AG04449 (cell line): ENCODE measurements at regions of chr11 and their contacts with region 1.

Region 1: GRCh38 chr11:73965076-73965860 is 14.4 kb downstream of the DNAJB13 start:
- DNase-seq: no peak
- H3K4me3 ChIP-seq: peak overlapping the region; percentile 13
- CTCF ChIP-seq: no peak

Region 2: DNA sequence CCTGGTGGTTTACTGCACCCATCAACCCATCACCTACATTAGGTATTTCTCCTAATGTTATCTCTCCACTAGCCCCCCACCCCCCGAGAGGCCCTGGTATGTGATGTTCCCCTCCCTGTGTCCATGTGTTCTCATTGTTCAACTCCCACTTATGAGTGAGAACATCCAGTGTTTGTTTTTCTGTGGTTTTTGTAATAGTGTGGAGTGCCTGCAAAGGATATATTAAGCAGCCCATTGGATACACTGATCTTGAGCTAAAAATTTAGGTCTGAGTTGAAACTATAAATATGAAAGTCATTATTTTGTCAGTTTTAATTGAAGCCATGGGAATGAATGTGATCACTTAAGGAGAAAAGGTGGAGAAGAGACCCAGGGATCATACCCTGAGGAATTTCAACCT is 154.6 kb before region 1 on chr11:
- CTCF ChIA-PET with region 1: no interaction called
- POLR2A ChIA-PET with region 1: no interaction called
- DNase-seq: no peak
- H3K4me3 ChIP-seq: no peak overlapping the region
- CTCF ChIP-seq: no peak

Region 3: GRCh38 chr11:73862971-73863370 is 102.3 kb before region 1 on chr11:
- CTCF ChIA-PET with region 1: no interaction called
- POLR2A ChIA-PET with region 1: no interaction called
- DNase-seq: no peak
- H3K4me3 ChIP-seq: no peak overlapping the region
- CTCF ChIP-seq: no peak

Region 4: DNA sequence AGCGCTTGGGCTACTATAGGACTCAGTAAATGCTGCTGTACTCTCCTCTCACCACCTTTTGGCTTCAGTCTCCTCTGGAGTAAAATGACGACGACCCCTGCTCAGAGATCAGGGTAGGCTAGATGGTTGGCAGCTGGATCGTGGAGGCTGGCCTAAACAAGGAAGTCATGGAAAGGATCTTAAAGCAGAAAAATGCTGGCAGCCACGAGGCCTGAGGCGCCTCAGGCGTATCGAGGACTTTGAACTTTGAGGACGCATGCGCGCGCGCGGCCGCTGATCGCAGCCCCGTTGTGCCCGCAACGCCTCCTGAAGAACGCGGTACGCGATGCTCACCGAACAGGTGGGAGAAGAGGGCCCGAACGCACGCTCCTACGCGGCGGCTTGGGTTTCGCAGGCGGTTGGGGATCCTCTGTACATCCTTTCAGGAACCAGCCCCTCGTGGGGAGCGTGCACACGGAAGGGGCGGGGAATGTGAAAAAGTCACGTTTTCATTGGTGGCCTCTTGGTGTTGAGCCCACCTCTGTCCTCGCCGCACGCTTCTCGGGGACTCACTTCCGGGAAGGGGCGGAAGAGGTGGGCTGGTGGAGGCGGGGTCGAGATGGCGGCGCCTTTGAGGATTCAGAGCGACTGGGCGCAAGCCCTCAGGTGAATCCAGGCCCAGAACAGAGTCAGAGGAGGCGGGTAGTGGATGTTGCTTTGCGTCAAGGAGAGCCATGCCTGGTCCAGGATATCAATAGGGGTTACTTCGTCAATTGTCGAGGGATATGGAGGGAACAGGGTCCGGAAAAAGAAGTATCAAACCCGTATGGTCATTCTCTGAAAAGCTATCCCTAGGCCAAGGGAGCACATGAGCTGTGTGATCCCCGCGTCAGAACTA is 88.6 kb before region 1 on chr11 and contains the starts of genes COA4 and PAAF1:
- CTCF ChIA-PET with region 1: no interaction called
- POLR2A ChIA-PET with region 1: no interaction called
- DNase-seq: peak; percentile 70
- H3K4me3 ChIP-seq: peak within 1 kb of the TSS; percentile 91
- CTCF ChIP-seq: no peak

Region 5: GRCh38 chr11:73982969-73983740 is 17.9 kb after region 1 on chr11:
- CTCF ChIA-PET with region 1: interaction called, 105 read pairs
- POLR2A ChIA-PET with region 1: interaction called, 3 read pairs
- DNase-seq: no peak
- H3K4me3 ChIP-seq: peak overlapping the region; percentile 76
- CTCF ChIP-seq: no peak

Region 6: GRCh38 chr11:74112877-74113276 is 147.6 kb after region 1 on chr11:
- CTCF ChIA-PET with region 1: no interaction called
- POLR2A ChIA-PET with region 1: no interaction called
- DNase-seq: no peak
- H3K4me3 ChIP-seq: no peak overlapping the region
- CTCF ChIP-seq: no peak

Region 7: DNA sequence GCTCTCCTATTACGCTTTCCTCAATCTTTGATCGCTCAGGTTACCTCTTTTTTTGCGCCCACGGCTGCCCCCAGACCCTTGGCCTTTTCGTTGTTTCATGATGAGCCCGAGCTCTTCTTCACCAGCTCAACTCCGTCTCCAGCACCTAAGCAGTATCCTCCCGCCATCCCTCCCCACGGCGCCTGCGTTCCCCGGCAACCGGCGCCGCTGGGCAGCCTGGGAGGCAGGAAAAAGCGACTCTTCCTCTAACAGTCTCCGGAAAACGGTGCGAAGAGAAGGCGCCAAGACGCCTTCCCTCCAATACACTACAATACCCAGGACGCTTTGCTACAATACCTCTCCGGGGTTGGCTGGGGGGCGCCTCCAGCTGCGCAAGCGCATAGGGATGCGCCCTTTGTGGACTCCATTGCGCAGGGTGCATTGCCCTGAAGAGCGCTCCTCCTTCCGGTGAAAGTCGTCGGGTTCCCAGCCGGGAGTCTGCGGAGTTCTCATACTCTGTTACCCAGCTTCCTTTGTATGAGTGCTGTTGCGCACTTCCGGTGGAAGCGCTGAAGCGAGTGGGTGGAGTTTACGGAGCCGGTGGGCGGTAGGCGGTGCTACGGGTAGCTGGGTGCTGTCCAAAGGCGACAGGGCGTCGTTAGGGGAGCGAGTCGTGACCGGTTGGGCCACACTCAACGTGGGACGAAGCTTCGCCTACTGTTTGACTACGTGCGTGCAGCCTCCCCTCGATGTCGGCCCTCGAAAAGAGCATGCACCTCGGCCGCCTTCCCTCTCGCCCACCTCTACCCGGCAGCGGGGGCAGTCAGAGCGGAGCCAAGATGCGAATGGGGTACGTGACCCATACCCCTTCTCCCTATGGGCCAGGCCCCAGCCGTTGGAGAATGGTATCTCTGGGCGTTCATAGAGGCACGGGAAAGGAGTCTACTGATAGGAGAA is 205.7 kb after region 1 on chr11 and contains the starts of genes C2CD3 and PPME1:
- CTCF ChIA-PET with region 1: interaction called, 12 read pairs
- POLR2A ChIA-PET with region 1: no interaction called
- DNase-seq: peak; percentile 95
- H3K4me3 ChIP-seq: peak within 1 kb of the TSS; percentile 94
- CTCF ChIP-seq: peak; percentile 43